Heart right ventricle (tissue), 16 donors: ENCODE measurements at regions of chr1 and their contacts with region 1.

Region 1: DNA sequence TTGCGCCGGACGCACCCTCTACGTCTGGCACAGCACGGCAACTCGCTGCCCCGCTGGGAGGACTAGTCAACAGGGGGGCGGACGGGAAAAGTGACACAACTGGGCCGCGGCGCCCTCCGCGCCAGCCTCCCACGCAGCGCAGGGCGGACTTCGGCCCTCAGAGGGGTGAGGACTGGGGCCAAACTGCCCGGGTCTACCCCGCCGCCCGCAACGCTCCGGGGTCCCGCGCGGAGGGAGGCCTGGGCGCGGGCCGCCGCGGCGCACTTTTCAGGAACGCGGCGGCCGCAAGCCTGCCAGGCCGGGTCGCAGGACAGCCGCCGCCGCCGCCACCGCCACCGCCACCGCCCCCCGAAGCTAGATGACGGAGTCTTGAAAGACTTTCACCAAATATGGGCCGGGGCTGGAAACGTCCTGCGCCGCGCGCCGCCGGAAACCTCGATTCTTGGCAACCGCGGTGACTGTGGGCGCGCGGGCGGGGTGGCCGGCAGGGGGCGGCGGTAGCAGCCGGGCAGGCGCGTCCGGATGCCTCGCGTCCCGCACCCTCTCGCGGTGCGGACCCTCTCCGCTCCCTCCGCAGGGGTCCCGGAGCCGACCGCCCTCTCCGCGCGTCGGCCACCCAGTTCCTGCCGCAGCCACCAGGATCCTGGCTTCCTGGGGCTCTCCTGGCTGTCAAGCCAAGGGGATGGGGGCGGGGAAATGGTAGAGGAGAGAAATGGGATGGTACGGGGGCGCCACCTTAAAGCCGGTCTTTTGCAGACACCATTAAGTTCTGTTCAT is 3.7 kb upstream of the CCN1 start:
- DNase-seq: peak; percentile 87 to 92
- ATAC-seq: peak; percentile 46 to 78 (median 62)
- H3K4me3 ChIP-seq: peak overlapping the region; percentile 57 to 89 (median 74)
- H3K27ac ChIP-seq: peak overlapping the region; percentile 93 to 100 (median 98)
- H3K4me1 ChIP-seq: peaks cover 0 to 54% (median 40%) of the 10 kb centered on the region in 9 donors
- H3K27me3 ChIP-seq: peaks cover 0 to 63% (median 0%) of the 10 kb centered on the region in 7 donors
- CTCF ChIP-seq: peak; percentile 72 to 91 (median 83)

Region 2: GRCh38 chr1:85313888-85314696 is 262.7 kb before region 1 on chr1:
- intact Hi-C with region 1: loop called in 9 of 10 experiments (anchors 2 to 10 kb)
- DNase-seq: peak in 1 of 2 donors; percentile 47
- ATAC-seq: peak; percentile 86 to 94 (median 92)
- H3K4me3 ChIP-seq: no peak overlapping the region
- H3K27ac ChIP-seq: peak overlapping the region; percentile 61 to 94 (median 80)
- H3K4me1 ChIP-seq: peaks cover 0 to 44% (median 29%) of the 10 kb centered on the region in 9 donors
- H3K27me3 ChIP-seq: no peaks in the 10 kb centered on the region
- CTCF ChIP-seq: no peak

Region 3: GRCh38 chr1:85454214-85454613 is 122.6 kb before region 1 on chr1:
- intact Hi-C with region 1: no loop called
- DNase-seq: no peak
- ATAC-seq: peak in 1 of 8 donors; percentile 26
- H3K4me3 ChIP-seq: no peak overlapping the region
- H3K27ac ChIP-seq: peak overlapping the region in 7 of 10 donors; percentile 6 to 59 (median 22)
- H3K4me1 ChIP-seq: peaks cover 0 to 17% (median 7%) of the 10 kb centered on the region in 9 donors
- H3K27me3 ChIP-seq: no peaks in the 10 kb centered on the region
- CTCF ChIP-seq: no peak

Region 4: DNA sequence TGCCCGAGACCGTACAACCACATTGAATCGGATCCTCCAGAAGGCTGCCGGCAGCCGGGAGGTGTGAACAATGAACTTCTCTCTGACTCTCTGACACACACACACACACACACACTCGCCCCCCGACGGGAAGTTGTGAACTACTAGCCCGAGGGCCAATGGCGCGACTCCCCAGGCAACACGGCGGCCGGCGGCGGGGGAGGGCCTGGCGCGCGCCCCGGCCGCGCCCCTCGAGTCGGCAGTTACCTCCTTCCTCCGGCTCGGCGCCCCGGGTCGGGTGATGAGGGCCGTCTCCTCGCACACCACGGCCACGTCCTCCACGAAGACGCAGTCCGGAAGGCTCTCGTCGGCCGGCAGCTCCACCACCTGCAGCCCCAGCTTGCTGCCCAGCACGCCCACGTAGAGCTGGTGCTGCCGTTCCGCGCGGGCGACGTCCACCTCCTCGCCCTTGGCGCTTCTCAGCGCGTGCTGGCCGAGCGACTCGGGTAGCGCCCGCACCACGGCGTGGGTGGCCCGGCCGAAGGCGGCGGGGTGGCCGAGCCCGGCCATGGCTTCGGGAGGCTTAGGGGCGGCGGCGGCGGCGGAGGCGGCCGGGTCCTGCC is 112.2 kb before region 1 on chr1:
- intact Hi-C with region 1: loop called in 4 of 10 experiments (anchors 10 kb)
- DNase-seq: peak; percentile 55 to 74
- ATAC-seq: peak; percentile 74 to 91 (median 87)
- H3K4me3 ChIP-seq: peak overlapping the region; percentile 31 to 90 (median 70)
- H3K27ac ChIP-seq: peak overlapping the region; percentile 26 to 89 (median 77)
- H3K4me1 ChIP-seq: peaks cover 0 to 20% (median 14%) of the 10 kb centered on the region in 9 donors
- H3K27me3 ChIP-seq: peaks cover 0 to 31% (median 0%) of the 10 kb centered on the region in 7 donors
- CTCF ChIP-seq: peak in 1 of 9 donors; percentile 0

Region 5: GRCh38 chr1:85555867-85556573 is 20.8 kb before region 1 on chr1:
- intact Hi-C with region 1: loop called in 1 of 10 experiments (anchors 2 kb)
- DNase-seq: no peak
- ATAC-seq: peak in 7 of 8 donors; percentile 21 to 91 (median 78)
- H3K4me3 ChIP-seq: no peak overlapping the region
- H3K27ac ChIP-seq: peak overlapping the region in 7 of 10 donors; percentile 6 to 67 (median 55)
- H3K4me1 ChIP-seq: peaks cover 0 to 31% (median 7%) of the 10 kb centered on the region in 9 donors
- H3K27me3 ChIP-seq: no peaks in the 10 kb centered on the region
- CTCF ChIP-seq: no peak

Region 6: DNA sequence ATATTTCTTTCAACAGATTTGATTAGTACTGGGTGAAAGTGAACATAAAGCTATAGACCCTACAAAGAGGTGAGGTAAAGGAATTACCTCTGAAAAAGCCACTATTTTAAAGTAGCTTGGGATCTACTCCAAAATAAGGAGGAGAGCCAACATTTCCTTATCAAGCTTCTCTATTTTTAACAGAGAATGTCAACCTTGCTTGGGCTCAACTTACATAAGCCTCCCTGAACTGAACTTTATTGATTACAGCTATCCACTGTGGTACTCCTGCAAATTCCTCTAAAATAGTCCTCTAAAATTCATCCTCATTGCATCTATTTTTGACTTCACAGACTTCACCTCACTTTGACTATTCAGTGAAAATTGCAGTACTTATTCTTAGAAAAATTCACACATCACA is 121.1 kb after region 1 on chr1:
- intact Hi-C with region 1: loop called in 5 of 10 experiments (anchors 5 to 10 kb)
- DNase-seq: no peak
- ATAC-seq: peak in 6 of 8 donors; percentile 16 to 79 (median 62)
- H3K4me3 ChIP-seq: no peak overlapping the region
- H3K27ac ChIP-seq: peak overlapping the region in 5 of 10 donors; percentile 16 to 55 (median 49)
- H3K4me1 ChIP-seq: peaks cover 0 to 19% (median 7%) of the 10 kb centered on the region in 9 donors
- H3K27me3 ChIP-seq: no peaks in the 10 kb centered on the region
- CTCF ChIP-seq: no peak